ENCODE measurements at regions of chr6 and their contacts with region 1.

Region 1: DNA sequence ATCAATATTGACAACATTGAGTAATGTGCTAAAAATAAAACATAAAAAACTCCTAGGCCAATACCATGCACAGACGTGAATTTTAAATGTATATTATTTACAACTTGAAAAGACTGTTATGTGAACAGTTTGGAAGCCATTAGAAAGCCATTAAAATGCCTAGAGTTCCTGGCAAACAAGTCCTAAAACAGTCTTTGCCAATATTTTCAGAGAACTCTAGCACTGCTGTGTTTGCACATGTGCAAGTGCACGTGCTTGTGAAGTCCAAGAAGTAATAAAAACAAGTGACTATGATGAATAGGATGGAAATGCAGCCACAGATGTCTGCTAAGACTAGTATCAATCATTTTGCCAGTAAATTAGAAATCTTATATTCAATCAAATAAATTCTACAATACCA is 1447.6 kb downstream of the GRIK2 start:
- DNase-seq: no peak
- ATAC-seq: no peak
- H3K4me3 ChIP-seq: no peak overlapping the region
- H3K27ac ChIP-seq: no peak overlapping the region
- H3K4me1 ChIP-seq: no peaks in the 10 kb centered on the region
- H3K27me3 ChIP-seq: no peaks in the 10 kb centered on the region
- CTCF ChIP-seq: no peak

Region 2: GRCh38 chr6:104525677-104526312 is 1684.7 kb after region 1 on chr6:
- CTCF ChIA-PET with region 1: no interaction called
- POLR2A ChIA-PET with region 1: no interaction called
- intact Hi-C with region 1: loop called (anchors 10 kb)
- DNase-seq: peak; percentile 80
- ATAC-seq: peak; percentile 86
- H3K4me3 ChIP-seq: peak overlapping the region; percentile 60
- H3K27ac ChIP-seq: no peak overlapping the region
- H3K4me1 ChIP-seq: no peaks in the 10 kb centered on the region
- H3K27me3 ChIP-seq: no peaks in the 10 kb centered on the region
- CTCF ChIP-seq: peak; percentile 87